ENCODE measurements at regions of chr9 and their contacts with region 1.

Region 1: DNA sequence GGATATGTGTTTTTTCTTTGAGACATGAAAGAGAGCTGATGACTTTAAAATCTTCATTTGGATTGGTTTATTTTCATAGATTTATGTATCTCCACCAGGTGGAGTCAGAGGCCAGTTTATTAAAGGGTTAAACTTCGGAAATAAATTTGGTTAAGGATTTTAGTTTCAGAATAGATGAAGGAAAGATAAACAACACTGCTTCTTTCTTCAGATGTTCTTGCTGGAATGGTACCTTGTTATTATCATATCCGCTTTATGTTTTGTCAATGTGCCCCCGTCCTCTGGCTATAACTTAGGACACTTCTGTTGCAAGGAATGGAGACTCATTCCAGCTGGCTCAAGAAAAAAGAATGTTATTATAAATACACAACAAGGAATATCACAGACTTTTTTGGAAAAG is 81.2 kb downstream of the ALDH1A1 start:
- H3K4me3 Mint-ChIP-seq: no peak overlapping the region
- H3K27ac Mint-ChIP-seq: no peak overlapping the region
- H3K4me1 Mint-ChIP-seq: peaks cover 5% of the 10 kb centered on the region
- H3K27me3 Mint-ChIP-seq: no peaks in the 10 kb centered on the region

Region 2: DNA sequence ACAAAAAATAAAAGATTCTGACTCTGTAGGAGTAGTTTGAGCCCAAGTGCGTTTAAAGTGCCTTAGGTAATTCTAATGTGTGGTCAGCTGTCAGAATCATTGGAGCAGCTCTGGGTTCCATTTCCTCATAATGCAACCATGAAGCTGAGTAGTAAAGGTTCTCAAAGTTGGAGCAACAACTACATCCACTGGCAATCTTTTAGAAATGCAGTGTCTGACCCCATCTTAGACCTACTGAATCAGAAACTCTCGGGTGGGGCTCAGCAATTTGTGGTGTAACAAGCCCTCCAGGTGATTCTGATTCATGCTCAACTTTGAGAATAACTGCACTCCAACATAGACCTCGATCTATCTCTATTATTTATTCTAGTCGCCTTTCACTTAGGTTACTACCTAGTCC is 88.8 kb after region 1 on chr9:
- intact Hi-C with region 1: loop called (anchors 1 kb)
- H3K4me3 Mint-ChIP-seq: no peak overlapping the region
- H3K27ac Mint-ChIP-seq: no peak overlapping the region
- H3K4me1 Mint-ChIP-seq: peaks cover 5% of the 10 kb centered on the region
- H3K27me3 Mint-ChIP-seq: no peaks in the 10 kb centered on the region

Region 3: GRCh38 chr9:73023025-73023541 is 151.4 kb after region 1 on chr9:
- intact Hi-C with region 1: loop called (anchors 1 kb)
- H3K4me3 Mint-ChIP-seq: no peak overlapping the region
- H3K27ac Mint-ChIP-seq: no peak overlapping the region
- H3K4me1 Mint-ChIP-seq: no peaks in the 10 kb centered on the region
- H3K27me3 Mint-ChIP-seq: no peaks in the 10 kb centered on the region

Region 4: GRCh38 chr9:73081979-73082657 is 210.4 kb after region 1 on chr9:
- intact Hi-C with region 1: loop called (anchors 5 kb)
- H3K4me3 Mint-ChIP-seq: no peak overlapping the region
- H3K27ac Mint-ChIP-seq: no peak overlapping the region
- H3K4me1 Mint-ChIP-seq: no peaks in the 10 kb centered on the region
- H3K27me3 Mint-ChIP-seq: no peaks in the 10 kb centered on the region

Region 5: DNA sequence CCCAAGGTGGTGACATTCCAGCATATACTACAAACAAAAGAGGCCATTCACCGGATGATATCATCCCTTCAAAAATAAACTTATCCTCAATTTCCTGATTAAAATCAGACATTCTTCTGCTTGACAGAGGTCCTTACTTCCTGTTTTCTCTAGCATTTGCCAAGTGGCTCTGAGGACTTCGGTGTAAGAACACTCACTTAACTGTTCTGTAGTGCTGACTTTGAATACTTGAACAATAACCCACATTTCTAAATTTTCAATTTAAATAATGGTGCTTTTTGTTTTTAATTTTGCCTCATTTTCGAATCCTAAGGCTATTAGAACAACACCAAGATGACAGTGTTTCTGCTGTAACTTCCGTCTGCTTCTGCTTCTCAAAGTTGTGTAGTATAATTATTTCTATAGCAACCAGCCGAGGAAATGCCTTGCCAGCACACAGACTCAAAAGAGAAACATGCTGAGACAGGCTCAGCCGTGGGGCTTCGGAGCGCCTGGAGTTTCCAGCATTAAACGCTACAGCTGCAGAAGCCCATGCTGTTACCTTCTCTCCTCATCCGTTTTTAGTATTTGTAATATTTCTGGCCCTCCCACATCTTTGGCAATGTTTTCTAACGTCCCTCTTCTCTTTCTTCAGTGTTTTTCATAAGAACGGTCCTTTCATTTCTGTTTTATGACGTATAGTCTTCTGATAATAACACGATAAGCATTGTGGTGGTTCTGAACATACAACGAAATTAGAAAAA is 260.5 kb after region 1 on chr9:
- intact Hi-C with region 1: no loop called
- H3K4me3 Mint-ChIP-seq: peak overlapping the region; percentile 80
- H3K27ac Mint-ChIP-seq: peak overlapping the region; percentile 96
- H3K4me1 Mint-ChIP-seq: peaks cover 26% of the 10 kb centered on the region
- H3K27me3 Mint-ChIP-seq: no peaks in the 10 kb centered on the region

Measured in dendritic cell treated with granulocyte-macrophage colony-stimulating factor and Interleukin-4, amounts not matched to agents 40 ng/mL and 50 ng/mL, for 4 days (primary cell).